ENCODE measurements at regions of chr21 and their contacts with region 1.

Region 1: GRCh38 chr21:28336314-28336713 is 656.4 kb downstream of the LTN1 start:
- DNase-seq: no peak
- ATAC-seq: peak; percentile 58

Region 2: GRCh38 chr21:26842976-26843932 is 1493.1 kb before region 1 on chr21:
- intact Hi-C with region 1: loop called (anchors 2 kb)
- DNase-seq: peak; percentile 96
- ATAC-seq: peak; percentile 59

Region 3: GRCh38 chr21:27700974-27701614 is 635.2 kb before region 1 on chr21:
- intact Hi-C with region 1: loop called (anchors 5 kb)
- DNase-seq: peak; percentile 87
- ATAC-seq: peak; percentile 92

Region 4: DNA sequence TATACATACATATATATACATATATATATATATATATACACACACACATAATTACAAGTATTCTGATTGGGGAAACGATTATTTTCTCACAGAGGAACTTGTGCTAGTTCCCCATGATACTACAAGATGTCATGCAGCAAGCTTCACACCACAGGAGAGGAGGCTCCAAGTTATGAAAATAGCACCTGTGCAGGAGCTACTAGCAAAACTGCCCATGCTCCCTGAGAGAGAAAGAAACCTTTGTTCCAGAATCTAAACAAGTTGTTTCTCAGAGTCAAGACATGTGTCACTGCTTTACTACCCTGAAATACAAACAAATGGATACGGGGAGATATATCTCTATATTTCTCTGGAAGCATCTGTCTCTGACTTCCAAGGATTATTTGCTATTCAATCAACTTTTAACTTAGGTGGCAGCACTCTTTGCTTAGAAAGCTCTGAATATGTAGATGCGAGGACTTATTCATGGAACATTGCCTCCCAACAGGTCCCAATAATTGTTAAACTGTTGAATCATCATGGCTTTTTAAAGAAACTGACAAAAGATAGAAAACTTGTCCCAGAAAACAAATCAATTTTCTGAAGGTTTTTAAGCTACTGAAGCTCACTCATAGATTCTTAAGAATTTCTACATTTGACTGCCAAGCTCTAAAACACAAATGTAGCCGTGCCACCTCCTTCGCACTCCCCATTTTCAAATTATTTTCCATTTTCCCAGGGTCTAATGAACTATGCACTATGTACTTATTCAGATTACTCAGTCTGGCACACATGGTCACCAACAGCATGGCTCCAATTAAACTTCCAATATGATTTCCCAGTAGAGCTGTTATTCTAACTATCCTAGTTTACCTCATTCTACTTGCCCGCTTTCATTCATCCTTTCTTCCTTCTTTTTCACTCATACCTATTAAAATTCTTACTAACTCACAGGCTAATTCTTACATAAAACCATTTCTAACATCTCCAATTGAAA is 272.8 kb before region 1 on chr21:
- intact Hi-C with region 1: loop called (anchors 10 kb)
- DNase-seq: no peak
- ATAC-seq: no peak

Measured in left ventricle myocardium superior (tissue), 1 donor.